Caco-2 (cell line): ENCODE measurements at regions of chr19 and their contacts with region 1.

Region 1: GRCh38 chr19:35458731-35459391 is 10.8 kb downstream of the FFAR2 start:
- DNase-seq: peak; percentile 74 to 82
- H3K4me3 ChIP-seq: no peak overlapping the region
- H3K4me3 Mint-ChIP-seq: no peak overlapping the region
- H3K27ac Mint-ChIP-seq: peak overlapping the region; percentile 11
- H3K4me1 ChIP-seq: peaks cover 23% of the 10 kb centered on the region
- H3K4me1 Mint-ChIP-seq: peaks cover 10% of the 10 kb centered on the region
- H3K27me3 ChIP-seq: no peaks in the 10 kb centered on the region
- H3K27me3 Mint-ChIP-seq: no peaks in the 10 kb centered on the region
- CTCF ChIP-seq: no peak

Region 2: GRCh38 chr19:35427187-35427586 is 31.7 kb before region 1 on chr19:
- CTCF ChIA-PET with region 1: no interaction called
- POLR2A ChIA-PET with region 1: no interaction called
- intact Hi-C with region 1: loop called (anchors 2 kb)
- DNase-seq: peak; percentile 63 to 78
- H3K4me3 ChIP-seq: no peak overlapping the region
- H3K4me3 Mint-ChIP-seq: peak overlapping the region; percentile 48
- H3K27ac Mint-ChIP-seq: peak overlapping the region; percentile 93
- H3K4me1 ChIP-seq: peaks cover 46% of the 10 kb centered on the region
- H3K4me1 Mint-ChIP-seq: peaks cover 25% of the 10 kb centered on the region
- H3K27me3 ChIP-seq: no peaks in the 10 kb centered on the region
- H3K27me3 Mint-ChIP-seq: no peaks in the 10 kb centered on the region
- CTCF ChIP-seq: no peak